ENCODE measurements at regions of chr5 and their contacts with region 1.

Region 1: DNA sequence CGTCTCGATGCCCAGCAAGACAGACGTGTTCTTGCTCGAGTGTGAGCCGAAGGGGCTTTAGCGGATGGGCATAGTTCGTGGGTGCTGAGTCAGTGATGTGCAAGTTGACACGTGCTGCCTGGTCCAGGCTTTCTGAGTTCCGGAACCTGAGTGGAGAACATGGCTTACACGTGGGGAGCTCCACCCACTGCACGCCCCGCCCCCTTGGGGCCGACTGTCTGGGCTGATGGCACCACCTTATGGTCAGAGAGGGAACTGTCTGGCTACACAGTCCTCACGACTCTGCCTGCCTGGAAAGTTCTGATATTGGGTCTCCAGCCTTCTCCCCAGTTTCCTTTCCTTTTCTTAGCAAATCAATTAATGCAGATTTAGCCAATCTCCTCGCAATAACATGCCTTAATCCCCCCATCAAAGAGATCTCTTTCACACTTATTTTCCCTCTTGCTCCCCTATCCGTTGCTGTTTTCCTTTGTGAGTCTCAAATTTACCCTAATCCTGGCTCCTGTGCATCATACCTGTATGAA is 3.8 kb upstream of the STC2 start:
- DNase-seq: peak; percentile 95
- ATAC-seq: peak; percentile 55
- H3K4me3 Mint-ChIP-seq: no peak overlapping the region
- H3K27ac Mint-ChIP-seq: peak overlapping the region; percentile 39
- H3K4me1 Mint-ChIP-seq: peaks cover 26% of the 10 kb centered on the region
- H3K27me3 Mint-ChIP-seq: peaks cover 50% of the 10 kb centered on the region

Region 2: GRCh38 chr5:171387345-171387969 is 1944.6 kb before region 1 on chr5 and contains the start of gene NPM1:
- CTCF ChIA-PET with region 1: no interaction called
- POLR2A ChIA-PET with region 1: no interaction called
- intact Hi-C with region 1: loop called in 1 of 2 experiments (anchors 5 kb)
- DNase-seq: peak; percentile 99
- ATAC-seq: peak; percentile 83
- H3K4me3 Mint-ChIP-seq: peak within 1 kb of the TSS; percentile 88
- H3K27ac Mint-ChIP-seq: peak within 1 kb of the TSS; percentile 99
- H3K4me1 Mint-ChIP-seq: peaks cover 37% of the 10 kb centered on the region
- H3K27me3 Mint-ChIP-seq: no peaks in the 10 kb centered on the region
- total RNA-seq, gene NPM1: 3,156 to 3,905 TPM

Region 3: DNA sequence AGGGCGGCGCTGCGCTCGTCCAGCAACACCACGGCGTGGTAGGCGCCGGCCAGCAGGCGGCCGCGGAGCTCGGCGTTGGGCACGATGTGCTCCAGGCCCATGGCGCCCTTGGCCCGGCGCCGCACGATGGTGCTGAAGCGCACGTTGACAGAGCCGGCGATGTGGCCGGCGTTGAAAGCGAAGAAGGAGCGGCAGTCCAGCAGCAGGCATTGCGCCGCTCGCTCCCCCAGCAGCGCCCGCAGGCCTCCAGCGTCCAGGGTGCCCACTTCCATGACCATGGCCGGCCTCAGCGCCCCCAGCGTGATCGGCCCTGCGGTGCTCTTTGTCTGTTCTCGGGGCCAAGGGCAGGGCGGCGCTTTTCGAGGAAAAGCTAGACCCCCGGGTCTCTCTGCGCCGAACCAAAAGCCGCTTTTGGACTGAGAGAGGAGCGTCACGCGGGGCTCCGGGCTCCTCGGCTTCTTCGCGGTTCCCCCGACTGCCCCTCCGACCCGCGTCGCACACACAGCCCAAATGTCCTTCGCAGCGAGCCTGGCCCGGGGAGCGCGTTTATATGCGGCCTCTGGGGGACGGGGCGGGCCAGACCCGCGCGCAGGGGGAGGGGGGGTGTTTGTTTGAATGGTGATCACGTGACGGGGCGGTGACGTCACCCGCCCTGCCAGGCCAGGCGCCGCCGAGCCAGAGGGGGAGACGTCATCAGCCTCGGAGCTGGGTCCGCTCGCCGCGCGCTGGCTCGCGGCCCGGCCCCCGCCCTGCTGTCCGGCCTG is 561.2 kb before region 1 on chr5 and contains the start of gene DUSP1:
- CTCF ChIA-PET with region 1: no interaction called
- POLR2A ChIA-PET with region 1: no interaction called
- intact Hi-C with region 1: loop called in 1 of 2 experiments (anchors 2 kb)
- DNase-seq: peak; percentile 99
- ATAC-seq: peak; percentile 60
- H3K4me3 Mint-ChIP-seq: peak within 1 kb of the TSS; percentile 82
- H3K27ac Mint-ChIP-seq: peak within 1 kb of the TSS; percentile 97
- H3K4me1 Mint-ChIP-seq: peaks cover 67% of the 10 kb centered on the region
- H3K27me3 Mint-ChIP-seq: no peaks in the 10 kb centered on the region
- total RNA-seq, gene DUSP1: 6.7 to 7.4 TPM

Region 4: DNA sequence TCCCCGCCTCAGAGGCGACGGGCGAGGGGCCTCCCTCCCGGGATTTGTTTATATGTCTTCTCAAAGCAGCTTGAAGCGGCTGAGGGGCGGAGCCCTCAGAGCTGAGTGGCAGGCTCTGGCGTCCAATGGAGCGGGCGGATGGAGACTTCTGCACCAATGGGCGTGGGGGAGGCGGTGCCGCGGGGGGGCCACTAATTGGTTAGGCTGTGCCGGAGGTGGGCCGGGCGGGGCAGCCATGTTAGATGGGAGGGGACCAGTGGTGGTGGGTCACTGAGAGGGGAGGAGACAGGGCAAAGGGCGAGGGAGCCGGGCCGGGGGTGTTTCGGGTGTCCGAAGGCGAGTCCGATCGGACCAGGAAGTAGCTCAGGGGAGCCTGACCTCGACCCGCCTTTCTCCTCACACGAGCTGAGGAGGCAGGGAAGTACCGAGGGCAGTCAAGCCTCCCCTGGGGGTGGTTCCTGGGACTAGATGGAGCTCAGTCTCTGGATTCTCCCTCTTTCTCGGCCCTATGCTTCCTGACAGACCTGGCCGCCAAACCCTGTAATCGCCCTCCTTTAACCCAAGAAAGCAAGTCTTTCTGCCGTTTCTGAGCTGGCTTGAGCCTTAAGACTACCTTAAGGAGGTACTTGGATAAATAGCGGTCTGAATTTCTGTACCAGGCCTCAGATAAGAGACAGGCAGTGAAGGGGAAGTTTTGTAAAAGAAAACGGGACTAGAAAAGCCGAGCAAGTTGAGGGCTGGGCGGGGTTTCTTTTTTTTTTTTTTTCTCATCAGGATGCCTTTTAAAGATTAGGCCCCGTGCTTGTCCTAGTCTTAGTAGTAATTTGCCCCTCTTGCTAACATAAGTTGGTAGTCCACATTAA is 274.7 kb before region 1 on chr5:
- CTCF ChIA-PET with region 1: no interaction called
- POLR2A ChIA-PET with region 1: interaction called, 3 read pairs
- intact Hi-C with region 1: loop called in 1 of 2 experiments (anchors 1 kb)
- DNase-seq: peak; percentile 100
- ATAC-seq: peak; percentile 90
- H3K4me3 Mint-ChIP-seq: peak overlapping the region; percentile 95
- H3K27ac Mint-ChIP-seq: peak overlapping the region; percentile 97
- H3K4me1 Mint-ChIP-seq: peaks cover 53% of the 10 kb centered on the region
- H3K27me3 Mint-ChIP-seq: no peaks in the 10 kb centered on the region

Region 5: GRCh38 chr5:173232499-173233346 is 99.3 kb before region 1 on chr5:
- CTCF ChIA-PET with region 1: interaction called, 4 read pairs
- POLR2A ChIA-PET with region 1: no interaction called
- intact Hi-C with region 1: loop called in 1 of 2 experiments (anchors 1 kb)
- DNase-seq: peak; percentile 42
- ATAC-seq: peak; percentile 17
- H3K4me3 Mint-ChIP-seq: peak overlapping the region; percentile 14
- H3K27ac Mint-ChIP-seq: no peak overlapping the region
- H3K4me1 Mint-ChIP-seq: peaks cover 43% of the 10 kb centered on the region
- H3K27me3 Mint-ChIP-seq: peaks cover 87% of the 10 kb centered on the region

Region 6: DNA sequence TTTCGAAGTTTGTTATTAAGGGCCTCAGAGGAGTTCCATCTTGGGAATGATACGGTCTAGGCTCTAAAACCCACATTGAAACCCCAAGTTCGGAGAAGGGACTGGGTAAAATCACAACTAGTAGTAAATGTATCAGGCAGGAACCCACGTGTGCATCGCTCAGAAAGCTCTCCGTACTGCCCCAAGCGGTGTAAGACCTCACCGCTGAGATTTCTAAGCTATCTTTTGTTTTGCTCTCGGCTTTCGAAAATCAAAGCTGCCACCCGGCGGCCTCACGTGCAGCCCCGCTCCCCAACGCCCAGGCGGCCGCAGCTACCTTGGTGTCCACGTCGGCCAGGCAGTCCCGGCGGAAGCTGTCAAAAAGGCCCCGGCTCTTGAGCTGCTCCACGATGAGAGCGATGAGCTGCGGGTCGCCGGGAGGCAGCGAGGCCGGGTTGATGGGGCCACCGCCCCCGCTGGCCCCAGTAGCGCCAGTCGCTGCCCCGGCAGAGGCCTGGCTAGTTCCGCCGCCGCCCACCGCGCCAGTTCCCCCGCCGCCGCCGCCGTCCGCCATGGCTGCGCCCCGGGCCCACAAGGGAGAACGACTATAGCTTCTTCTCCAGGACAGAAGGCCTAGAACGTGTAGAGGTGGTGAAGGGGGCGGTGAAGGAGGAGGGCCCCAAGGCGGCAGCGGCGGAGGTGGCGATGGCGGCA is 284.0 kb after region 1 on chr5:
- CTCF ChIA-PET with region 1: no interaction called
- POLR2A ChIA-PET with region 1: no interaction called
- intact Hi-C with region 1: loop called in 1 of 2 experiments (anchors 1 kb)
- DNase-seq: peak; percentile 84
- ATAC-seq: peak; percentile 63
- H3K4me3 Mint-ChIP-seq: peak overlapping the region; percentile 95
- H3K27ac Mint-ChIP-seq: peak overlapping the region; percentile 83
- H3K4me1 Mint-ChIP-seq: peaks cover 56% of the 10 kb centered on the region
- H3K27me3 Mint-ChIP-seq: no peaks in the 10 kb centered on the region